KBM-7 (cell line): ENCODE measurements at regions of chr4 and their contacts with region 1.

Region 1: GRCh38 chr4:41882625-41883347 is 52.4 kb upstream of the TMEM33 start:
- DNase-seq: peak; percentile 59

Region 2: DNA sequence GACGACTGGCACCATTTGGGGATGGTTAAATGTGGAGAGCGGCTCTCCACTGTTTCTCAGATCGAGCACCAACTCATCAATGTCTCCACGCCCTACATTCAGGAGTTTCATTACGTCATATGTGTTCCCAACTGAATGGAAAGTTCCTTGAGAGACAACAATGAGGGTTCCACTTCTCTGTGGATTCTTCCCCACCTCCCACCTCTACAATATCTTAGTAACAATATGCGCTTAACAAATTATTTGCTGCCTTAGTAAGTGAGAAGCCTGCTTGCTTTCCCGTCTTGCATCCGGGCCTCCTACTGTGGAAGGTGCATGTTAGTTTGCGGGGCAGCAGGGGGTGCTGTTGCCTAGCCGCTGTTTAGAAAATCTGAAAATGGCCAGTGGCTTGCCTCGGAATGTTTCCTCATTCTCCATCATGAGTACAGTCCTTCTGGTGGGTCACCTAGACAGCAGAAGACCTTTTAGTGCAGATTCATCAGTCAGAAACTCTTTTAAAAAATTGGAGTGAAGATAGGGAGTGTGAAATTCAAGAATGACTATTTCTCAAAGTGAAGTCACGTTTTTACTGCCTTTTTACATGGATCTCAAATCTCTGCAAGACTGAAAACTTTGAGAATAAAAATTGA is 190.0 kb before region 1 on chr4:
- in situ Hi-C with region 1: loop called (anchors 25 kb)
- DNase-seq: peak; percentile 67